ENCODE measurements at regions of chr6 and their contacts with region 1.

Region 1: GRCh38 chr6:57013521-57013926 is 33.0 kb upstream of the KIAA1586 start:
- DNase-seq: no peak
- ATAC-seq: no peak
- H3K4me3 ChIP-seq: no peak overlapping the region
- H3K27ac ChIP-seq: no peak overlapping the region
- H3K4me1 ChIP-seq: no peaks in the 10 kb centered on the region
- H3K27me3 ChIP-seq: no peaks in the 10 kb centered on the region
- CTCF ChIP-seq: no peak

Region 2: DNA sequence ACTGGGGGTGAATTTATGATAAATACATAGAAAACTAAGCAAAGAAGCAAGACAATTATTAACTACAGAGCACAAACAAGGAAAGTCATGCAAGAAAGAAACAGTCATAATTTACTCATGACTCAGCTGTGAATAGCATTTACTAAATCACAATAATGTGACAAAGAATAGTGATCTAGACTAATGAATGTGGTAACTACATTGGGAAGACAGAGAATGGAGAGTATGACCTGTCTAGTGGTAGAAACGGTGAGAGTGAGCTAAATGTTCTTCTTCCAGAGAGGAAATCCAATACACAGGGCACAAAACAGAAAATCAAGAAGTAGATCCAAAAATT is 217.4 kb before region 1 on chr6:
- CTCF ChIA-PET with region 1: no interaction called
- POLR2A ChIA-PET with region 1: no interaction called
- in situ Hi-C with region 1: no loop called
- intact Hi-C with region 1: no loop called
- DNase-seq: no peak
- ATAC-seq: peak; percentile 49; the same call in 1 of the 2 replicates
- H3K4me3 ChIP-seq: no peak overlapping the region
- H3K27ac ChIP-seq: peak overlapping the region; percentile 1; the same call in 1 of the 2 replicates
- H3K4me1 ChIP-seq: peaks cover 30% of the 10 kb centered on the region
- H3K27me3 ChIP-seq: no peaks in the 10 kb centered on the region
- CTCF ChIP-seq: no peak

Region 3: GRCh38 chr6:56995347-56995902 is 18.1 kb before region 1 on chr6:
- CTCF ChIA-PET with region 1: no interaction called
- POLR2A ChIA-PET with region 1: interaction called, 10 read pairs
- in situ Hi-C with region 1: no loop called
- intact Hi-C with region 1: no loop called
- DNase-seq: no peak
- ATAC-seq: 0 out of 2 replicates have a peak, but pooled peaks have one; percentile 53
- H3K4me3 ChIP-seq: no peak overlapping the region
- H3K27ac ChIP-seq: no peak overlapping the region
- H3K4me1 ChIP-seq: no peaks in the 10 kb centered on the region
- H3K27me3 ChIP-seq: no peaks in the 10 kb centered on the region
- CTCF ChIP-seq: peak; percentile 64